Ovary (tissue), 10 donors: ENCODE measurements at regions of chr7 and their contacts with region 1.

Region 1: DNA sequence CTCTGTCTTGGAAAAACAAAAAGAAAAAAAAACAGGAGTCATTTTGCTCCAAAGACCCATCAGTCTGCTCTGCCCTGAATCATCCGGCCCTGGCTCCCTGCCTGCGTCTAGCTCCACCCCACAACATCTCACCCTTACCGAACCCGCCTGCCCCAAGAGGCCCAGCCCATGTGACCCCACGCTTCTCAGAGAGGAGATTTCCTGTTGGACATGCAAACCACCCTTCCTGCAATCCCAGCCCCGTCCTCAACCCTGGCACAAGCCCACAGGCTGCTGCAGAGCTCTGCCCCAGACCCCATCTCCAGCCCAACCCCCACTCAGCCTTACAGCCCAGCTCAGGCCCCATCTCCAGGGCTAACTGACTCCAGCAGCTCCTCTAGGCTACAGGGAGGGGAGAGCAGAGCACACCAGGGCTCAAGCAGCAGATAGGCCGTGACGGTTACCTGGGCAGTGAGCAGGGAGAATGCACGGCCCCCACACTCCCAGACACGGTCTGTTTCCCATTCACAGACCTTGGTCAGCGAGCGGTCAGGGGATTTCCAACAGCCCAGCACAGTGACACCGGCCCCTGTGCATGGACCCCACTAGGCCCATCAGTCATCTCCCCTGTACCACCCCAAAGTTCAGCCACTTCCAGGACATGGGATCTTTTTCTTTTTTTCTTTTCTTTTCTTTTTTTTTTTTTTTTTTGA is 69.9 kb upstream of the GTF2I start:
- DNase-seq: peak; percentile 89 to 92 (median 90)
- H3K4me3 ChIP-seq: no peak overlapping the region
- H3K27ac ChIP-seq: peak overlapping the region in 1 of 2 donors; percentile 31
- H3K4me1 ChIP-seq: peaks cover 5% of the 10 kb centered on the region
- H3K27me3 ChIP-seq: no peaks in the 10 kb centered on the region
- CTCF ChIP-seq: no peak
- EP300 ChIP-seq: no peak
- POLR2A ChIP-seq: no peak

Region 2: GRCh38 chr7:73842247-73842895 is 745.2 kb before region 1 on chr7 and contains the start of gene METTL27:
- intact Hi-C with region 1: loop called in 1 of 4 experiments (anchors 10 kb)
- DNase-seq: peak; percentile 91 to 94 (median 93)
- H3K4me3 ChIP-seq: peak within 1 kb of the TSS; percentile 65
- H3K27ac ChIP-seq: peak within 1 kb of the TSS in 1 of 2 donors; percentile 32
- H3K4me1 ChIP-seq: no peaks in the 10 kb centered on the region
- H3K27me3 ChIP-seq: no peaks in the 10 kb centered on the region
- CTCF ChIP-seq: no peak
- EP300 ChIP-seq: no peak
- POLR2A ChIP-seq: peak; percentile 58
- total RNA-seq, gene METTL27: 1.8 to 25.6 (median 4.3) TPM